Activated naive CD4-positive, alpha-beta T cell treated with anti-CD3 and anti-CD28 coated beads for 36 hours (primary cell): ENCODE measurements at regions of chr2 and their contacts with region 1.

Region 1: DNA sequence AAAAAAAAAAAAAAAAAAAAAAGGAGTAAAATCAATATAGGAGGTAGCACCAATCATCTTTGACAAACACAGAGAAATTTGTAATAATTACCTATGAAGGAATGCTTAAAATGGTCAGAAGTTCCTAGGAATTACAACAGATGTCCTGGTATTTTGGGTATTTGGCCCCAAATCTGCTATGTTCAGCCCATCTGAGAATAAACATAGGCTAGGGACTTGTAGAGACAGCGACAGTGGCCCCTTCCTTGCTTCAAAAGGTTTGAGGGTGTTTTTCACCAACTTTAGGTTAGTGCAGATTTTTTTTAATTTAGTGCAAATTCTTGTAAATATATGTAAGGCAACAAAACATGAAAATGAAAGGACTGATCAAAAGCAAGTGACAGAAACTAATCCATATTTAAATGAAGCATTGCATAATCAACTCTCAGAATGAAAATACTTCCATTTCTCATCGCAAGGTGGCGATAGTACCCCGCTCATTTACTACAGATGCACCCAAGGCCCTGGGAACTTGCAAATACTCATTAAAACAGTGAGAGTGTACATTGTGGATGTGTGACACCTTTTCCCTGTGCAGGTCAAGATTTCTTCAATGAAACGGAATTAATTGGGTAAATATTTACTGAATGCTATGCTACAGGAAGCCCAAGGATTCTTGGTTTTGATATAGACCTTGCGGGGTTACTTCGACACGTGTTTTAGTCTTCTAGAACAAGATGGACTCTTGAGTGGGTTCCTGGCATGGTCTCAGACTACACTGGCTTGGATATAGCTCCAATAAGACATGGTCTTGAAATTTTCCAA is 44.6 kb downstream of the FAM124B start:
- DNase-seq: peak; percentile 76
- H3K4me3 Mint-ChIP-seq: no peak overlapping the region
- H3K27ac Mint-ChIP-seq: no peak overlapping the region
- H3K4me1 Mint-ChIP-seq: no peaks in the 10 kb centered on the region
- H3K27me3 Mint-ChIP-seq: no peaks in the 10 kb centered on the region

Region 2: GRCh38 chr2:223944703-223945531 is 412.4 kb before region 1 on chr2 and contains the start of gene WDFY1:
- CTCF ChIA-PET with region 1: no interaction called
- intact Hi-C with region 1: no loop called
- DNase-seq: peak; percentile 82
- H3K4me3 Mint-ChIP-seq: peak within 1 kb of the TSS; percentile 92
- H3K27ac Mint-ChIP-seq: peak within 1 kb of the TSS; percentile 86
- H3K4me1 Mint-ChIP-seq: peaks cover 58% of the 10 kb centered on the region
- H3K27me3 Mint-ChIP-seq: no peaks in the 10 kb centered on the region
- total RNA-seq, gene WDFY1: 39.4 to 39.9 TPM

Region 3: GRCh38 chr2:224369028-224369632 is 11.8 kb after region 1 on chr2:
- CTCF ChIA-PET with region 1: interaction called, 18 read pairs
- intact Hi-C with region 1: no loop called
- DNase-seq: peak; percentile 14
- H3K4me3 Mint-ChIP-seq: no peak overlapping the region
- H3K27ac Mint-ChIP-seq: no peak overlapping the region
- H3K4me1 Mint-ChIP-seq: no peaks in the 10 kb centered on the region
- H3K27me3 Mint-ChIP-seq: no peaks in the 10 kb centered on the region

Region 4: DNA sequence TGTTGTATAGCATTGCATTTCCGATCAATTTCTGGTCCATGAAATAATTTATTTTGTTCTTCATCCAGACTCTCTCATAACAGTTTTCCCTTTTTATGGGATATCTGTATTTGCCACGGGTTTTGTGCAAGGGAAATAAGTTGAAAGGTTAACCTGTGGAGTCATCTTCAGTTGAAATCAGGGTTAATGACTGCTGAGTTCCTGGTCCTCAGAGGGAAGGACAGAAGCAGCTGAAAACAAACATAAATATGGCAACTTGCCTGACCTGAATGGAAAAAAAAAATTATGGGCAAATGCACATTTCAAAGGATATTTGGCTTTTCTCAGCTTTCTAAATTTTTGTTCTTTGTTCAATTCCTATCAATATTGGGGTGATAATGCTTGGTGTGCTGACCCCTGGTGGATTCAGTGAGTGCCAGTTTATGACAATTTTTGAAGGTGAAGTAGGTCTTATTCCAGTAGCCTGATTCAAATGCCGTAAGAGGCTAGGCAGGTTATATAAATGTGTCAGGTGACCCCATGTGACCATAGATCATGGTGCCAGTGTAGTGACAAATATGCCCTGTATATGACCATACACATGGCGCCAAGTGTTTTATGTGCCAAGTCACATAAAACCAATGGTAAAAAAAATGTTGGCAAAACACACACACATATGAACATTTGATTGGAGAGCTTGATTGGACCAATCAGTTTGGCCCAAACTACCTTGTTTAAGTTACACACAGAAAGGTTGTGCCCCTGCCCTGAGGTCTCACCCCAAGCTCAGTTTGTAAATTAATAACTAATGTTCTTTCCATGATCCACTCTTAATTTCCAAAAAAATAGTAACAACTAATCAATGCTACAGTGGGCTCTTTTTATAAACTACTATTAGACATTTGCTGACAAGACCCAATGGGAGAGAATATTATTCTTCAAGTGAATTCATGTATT is 92.2 kb after region 1 on chr2:
- CTCF ChIA-PET with region 1: no interaction called
- intact Hi-C with region 1: loop called (anchors 1 kb)
- DNase-seq: peak; percentile 41
- H3K4me3 Mint-ChIP-seq: no peak overlapping the region
- H3K27ac Mint-ChIP-seq: no peak overlapping the region
- H3K4me1 Mint-ChIP-seq: no peaks in the 10 kb centered on the region
- H3K27me3 Mint-ChIP-seq: peaks cover 3% of the 10 kb centered on the region

Region 5: DNA sequence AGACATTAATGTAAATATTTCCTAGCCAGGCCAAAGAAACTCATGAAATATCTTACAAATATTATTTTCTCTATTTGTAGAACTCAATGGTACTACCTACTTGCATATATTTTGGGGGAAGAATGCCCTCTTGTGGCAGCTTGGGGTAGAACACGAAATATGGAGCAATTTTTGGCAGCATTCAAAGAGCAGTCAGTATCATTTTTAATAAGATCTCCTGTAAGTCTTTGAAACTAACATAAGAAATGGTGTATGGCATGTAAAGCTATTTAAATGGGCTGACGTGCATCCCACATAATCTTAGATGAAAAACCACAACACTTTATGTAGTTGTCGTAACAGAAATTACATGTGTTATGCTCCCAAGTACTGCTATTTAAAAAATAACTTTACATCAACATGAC is 421.2 kb after region 1 on chr2:
- CTCF ChIA-PET with region 1: interaction called, 7 read pairs
- intact Hi-C with region 1: loop called (anchors 1 kb)
- DNase-seq: peak; percentile 86
- H3K4me3 Mint-ChIP-seq: no peak overlapping the region
- H3K27ac Mint-ChIP-seq: peak overlapping the region; percentile 22
- H3K4me1 Mint-ChIP-seq: peaks cover 5% of the 10 kb centered on the region
- H3K27me3 Mint-ChIP-seq: no peaks in the 10 kb centered on the region

Region 6: DNA sequence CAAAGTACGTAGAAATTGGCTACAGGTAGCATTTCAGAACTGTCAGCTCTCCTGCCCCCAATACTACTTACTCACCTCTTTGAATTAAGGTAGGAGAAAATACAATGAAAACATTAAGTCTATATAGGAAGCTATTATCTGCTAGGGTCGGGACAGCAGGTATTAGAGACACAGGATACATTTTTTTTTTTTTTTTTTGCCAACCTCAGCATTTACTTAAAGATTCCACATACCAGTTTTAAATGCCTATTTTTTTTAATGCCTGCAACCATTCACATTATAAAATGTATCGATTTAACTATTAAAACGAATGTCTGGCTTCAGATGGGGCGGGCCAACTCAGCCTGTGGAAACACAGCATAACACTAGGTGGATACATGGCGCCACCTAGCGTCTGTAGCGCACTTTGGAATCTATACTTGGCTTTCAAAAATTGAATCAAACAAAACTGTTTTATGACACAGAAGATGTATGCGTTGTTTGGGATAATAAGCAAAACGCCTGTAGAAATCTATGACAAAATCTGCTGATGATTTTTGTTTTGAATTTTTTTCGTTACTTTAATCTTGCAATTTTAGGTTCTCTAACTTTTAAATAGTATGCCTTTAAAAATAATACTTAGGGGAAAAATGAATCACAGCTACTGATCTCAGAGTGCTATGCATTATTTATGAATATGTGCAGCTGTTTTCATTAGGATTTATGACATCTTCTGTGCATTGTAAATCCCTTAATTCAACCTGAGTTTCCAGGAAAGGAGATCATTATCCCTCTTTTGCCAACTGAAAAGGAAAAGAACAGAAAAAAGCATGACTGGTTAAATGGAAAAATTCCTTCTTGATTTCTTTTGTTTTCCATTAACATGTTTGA is 1303.2 kb after region 1 on chr2:
- CTCF ChIA-PET with region 1: no interaction called
- intact Hi-C with region 1: loop called (anchors 1 kb)
- DNase-seq: peak; percentile 90
- H3K4me3 Mint-ChIP-seq: no peak overlapping the region
- H3K27ac Mint-ChIP-seq: no peak overlapping the region
- H3K4me1 Mint-ChIP-seq: no peaks in the 10 kb centered on the region
- H3K27me3 Mint-ChIP-seq: peaks cover 15% of the 10 kb centered on the region